H1 (cell line): ENCODE measurements at regions of chr15 and their contacts with region 1.

Region 1: DNA sequence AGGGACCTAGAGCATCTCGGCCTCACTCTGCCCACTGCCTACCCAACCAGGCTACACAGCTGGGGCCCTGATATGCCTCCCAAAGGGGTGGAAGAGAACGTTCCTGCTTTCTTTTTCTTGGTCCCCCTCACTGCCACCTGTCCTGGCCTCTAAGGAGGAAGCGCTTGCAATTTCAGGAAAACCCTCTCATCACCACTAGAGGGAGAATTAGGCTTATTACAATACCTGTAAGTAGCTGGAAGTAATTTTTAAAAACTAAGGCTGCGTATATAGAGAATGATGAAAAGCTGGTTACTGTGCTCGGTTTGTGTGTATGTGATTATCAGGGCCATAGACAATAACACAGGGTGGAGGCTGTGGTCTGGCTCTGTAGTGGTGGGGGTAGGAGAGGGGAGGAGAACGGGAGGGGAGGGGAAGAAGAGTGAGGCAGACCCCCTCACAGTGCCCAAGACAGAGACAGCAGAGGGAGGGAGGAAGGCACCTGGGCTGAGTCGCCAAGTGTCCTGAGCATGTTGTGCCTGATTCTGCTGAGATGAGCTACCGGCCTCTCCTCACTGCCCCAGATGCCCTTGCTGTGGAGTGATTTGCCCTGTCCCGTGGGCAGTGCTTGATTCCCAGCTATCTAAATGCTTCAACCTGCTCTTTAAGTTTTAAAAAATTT is 3.3 kb downstream of the GABRG3 start:
- DNase-seq: peak in 1 of 2 experiments; percentile 57
- H3K4me3 ChIP-seq: no peak overlapping the region
- H3K27ac ChIP-seq: no peak overlapping the region
- H3K4me1 ChIP-seq: peaks cover 0 to 3% (median 1%) of the 10 kb centered on the region in 4 experiments; a peak in 1 of 7 replicates
- H3K27me3 ChIP-seq: peaks cover 13 to 40% (median 35%) of the 10 kb centered on the region in 4 experiments
- CTCF ChIP-seq: peak; percentile 18 to 66 (median 49); a peak in 3 of 4 replicates
- EP300 ChIP-seq: no peak
- POLR2A ChIP-seq: no peak
- RAD21 ChIP-seq: peak; percentile 44

Region 2: DNA sequence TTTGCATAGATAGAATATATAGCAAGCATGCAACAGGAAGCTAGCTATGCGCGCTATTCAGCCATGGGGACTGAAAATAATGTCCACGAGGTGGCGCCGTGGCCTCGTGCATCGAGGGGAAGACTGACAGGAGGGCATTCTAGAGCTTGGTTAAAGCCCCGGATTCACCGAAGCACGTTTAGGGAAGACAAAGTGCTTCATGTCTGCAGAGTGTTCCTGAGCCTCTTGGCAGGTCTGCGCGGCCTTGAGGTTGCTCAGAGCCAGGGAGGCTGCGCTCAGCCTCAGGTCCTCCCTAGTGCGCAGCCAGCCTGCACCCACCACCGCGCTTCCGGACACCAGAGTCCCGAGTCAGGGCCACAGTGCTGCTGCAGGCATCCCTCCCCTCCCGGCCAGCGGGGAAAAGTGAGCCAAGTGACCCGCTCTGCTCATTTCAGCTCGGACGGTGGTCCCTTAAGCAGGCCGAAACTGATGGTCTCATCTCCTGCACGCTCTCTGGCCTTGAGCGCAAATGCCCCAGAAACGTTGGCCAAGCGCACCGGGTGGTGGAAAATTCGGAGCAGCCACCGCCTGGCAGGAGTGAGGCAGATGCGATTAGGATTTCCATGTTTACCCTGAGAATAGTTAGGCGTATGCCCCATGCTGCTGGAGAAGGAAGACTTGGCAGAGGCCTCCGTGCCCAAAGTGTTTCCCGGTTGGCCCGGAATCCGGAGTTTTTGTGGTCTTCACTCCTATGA is 82.6 kb before region 1 on chr15:
- CTCF ChIA-PET with region 1: interaction called, 10 read pairs
- POLR2A ChIA-PET with region 1: interaction called, 3 read pairs
- DNase-seq: peak; percentile 62 to 93
- H3K4me3 ChIP-seq: no peak overlapping the region
- H3K27ac ChIP-seq: no peak overlapping the region
- H3K4me1 ChIP-seq: peaks cover 0 to 5% (median 4%) of the 10 kb centered on the region in 4 experiments; a peak in 4 of 7 replicates
- H3K27me3 ChIP-seq: no peaks in the 10 kb centered on the region; a peak in 1 of 7 replicates
- CTCF ChIP-seq: peak; percentile 94 to 95 (median 94)
- EP300 ChIP-seq: no peak
- POLR2A ChIP-seq: no peak
- RAD21 ChIP-seq: peak; percentile 97

Region 3: GRCh38 chr15:26996250-26996649 is 22.0 kb after region 1 on chr15:
- CTCF ChIA-PET with region 1: interaction called, 11 read pairs
- POLR2A ChIA-PET with region 1: no interaction called
- DNase-seq: no peak
- H3K4me3 ChIP-seq: no peak overlapping the region
- H3K27ac ChIP-seq: no peak overlapping the region
- H3K4me1 ChIP-seq: no peaks in the 10 kb centered on the region
- H3K27me3 ChIP-seq: no peaks in the 10 kb centered on the region
- CTCF ChIP-seq: no peak
- EP300 ChIP-seq: no peak
- POLR2A ChIP-seq: no peak
- RAD21 ChIP-seq: no peak

Region 4: GRCh38 chr15:27017168-27017809 is 43.0 kb after region 1 on chr15:
- CTCF ChIA-PET with region 1: interaction called, 13 read pairs
- POLR2A ChIA-PET with region 1: no interaction called
- DNase-seq: peak; percentile 43 to 94
- H3K4me3 ChIP-seq: no peak overlapping the region
- H3K27ac ChIP-seq: no peak overlapping the region
- H3K4me1 ChIP-seq: no peaks in the 10 kb centered on the region
- H3K27me3 ChIP-seq: no peaks in the 10 kb centered on the region
- CTCF ChIP-seq: peak; percentile 69 to 100 (median 99)
- EP300 ChIP-seq: no peak
- POLR2A ChIP-seq: no peak
- RAD21 ChIP-seq: peak; percentile 97 to 98